SK-N-SH (cell line): ENCODE measurements at regions of chr16 and their contacts with region 1.

Region 1: GRCh38 chr16:56964243-56965148 is 2.7 kb downstream of the CETP start:
- DNase-seq: peak; percentile 79
- H3K4me3 ChIP-seq: peak overlapping the region in 1 of 2 experiments; percentile 42; a peak in 1 of 4 replicates
- H3K27ac ChIP-seq: no peak overlapping the region
- H3K4me1 ChIP-seq: peaks cover 0 to 12% of the 10 kb centered on the region in 2 experiments; a peak in 1 of 4 replicates
- H3K27me3 ChIP-seq: no peaks in the 10 kb centered on the region
- CTCF ChIP-seq: peak; percentile 82
- EP300 ChIP-seq: no peak
- RAD21 ChIP-seq: peak; percentile 58

Region 2: DNA sequence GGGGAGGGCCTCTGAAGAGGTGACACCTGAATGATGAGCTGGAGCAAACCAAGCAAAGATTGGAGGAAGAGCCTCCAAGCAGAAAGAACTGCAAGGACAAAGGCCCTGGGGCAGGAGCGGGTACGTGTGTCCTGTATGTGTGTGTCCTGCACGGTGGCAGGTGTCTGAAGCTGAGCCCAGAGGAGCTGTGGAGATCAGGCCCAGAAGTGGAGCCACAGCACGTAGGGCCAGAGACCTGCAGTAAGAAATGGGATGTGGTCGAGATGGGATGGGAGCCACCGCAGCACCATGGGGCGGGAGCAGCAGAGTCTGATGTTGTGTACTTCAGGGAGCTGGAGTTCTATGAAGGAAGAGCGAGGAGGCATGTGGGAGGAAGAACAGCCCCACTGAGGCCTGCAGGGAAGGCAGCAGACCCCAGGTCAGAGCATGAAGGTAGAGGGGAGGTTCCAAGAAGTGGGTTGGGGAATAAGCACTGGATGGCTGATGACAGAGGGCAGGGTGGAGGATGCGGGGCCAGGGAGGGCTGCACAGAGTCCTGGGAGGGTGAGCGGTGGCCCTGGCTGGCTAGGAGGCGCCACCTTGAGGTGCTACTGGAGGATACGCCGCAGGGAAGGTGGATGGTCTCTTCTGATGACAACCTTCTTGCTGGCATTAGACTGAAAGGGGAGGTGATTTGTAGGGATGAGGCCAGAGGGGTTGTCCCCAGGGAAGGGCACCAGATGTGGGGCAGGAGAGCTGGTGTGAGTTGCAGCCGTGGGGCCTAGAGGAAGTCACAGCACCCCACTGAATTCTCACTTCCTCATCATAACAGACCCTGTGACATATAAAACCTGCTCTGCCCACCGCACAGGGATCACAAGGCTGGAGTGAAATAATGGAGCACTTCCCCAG is 13.4 kb before region 1 on chr16:
- CTCF ChIA-PET with region 1: interaction called, 35 read pairs
- POLR2A ChIA-PET with region 1: no interaction called
- DNase-seq: peak; percentile 82
- H3K4me3 ChIP-seq: no peak overlapping the region
- H3K27ac ChIP-seq: no peak overlapping the region
- H3K4me1 ChIP-seq: no peaks in the 10 kb centered on the region; a peak in 1 of 4 replicates
- H3K27me3 ChIP-seq: no peaks in the 10 kb centered on the region
- CTCF ChIP-seq: peak; percentile 65
- EP300 ChIP-seq: no peak
- RAD21 ChIP-seq: peak; percentile 82

Region 3: DNA sequence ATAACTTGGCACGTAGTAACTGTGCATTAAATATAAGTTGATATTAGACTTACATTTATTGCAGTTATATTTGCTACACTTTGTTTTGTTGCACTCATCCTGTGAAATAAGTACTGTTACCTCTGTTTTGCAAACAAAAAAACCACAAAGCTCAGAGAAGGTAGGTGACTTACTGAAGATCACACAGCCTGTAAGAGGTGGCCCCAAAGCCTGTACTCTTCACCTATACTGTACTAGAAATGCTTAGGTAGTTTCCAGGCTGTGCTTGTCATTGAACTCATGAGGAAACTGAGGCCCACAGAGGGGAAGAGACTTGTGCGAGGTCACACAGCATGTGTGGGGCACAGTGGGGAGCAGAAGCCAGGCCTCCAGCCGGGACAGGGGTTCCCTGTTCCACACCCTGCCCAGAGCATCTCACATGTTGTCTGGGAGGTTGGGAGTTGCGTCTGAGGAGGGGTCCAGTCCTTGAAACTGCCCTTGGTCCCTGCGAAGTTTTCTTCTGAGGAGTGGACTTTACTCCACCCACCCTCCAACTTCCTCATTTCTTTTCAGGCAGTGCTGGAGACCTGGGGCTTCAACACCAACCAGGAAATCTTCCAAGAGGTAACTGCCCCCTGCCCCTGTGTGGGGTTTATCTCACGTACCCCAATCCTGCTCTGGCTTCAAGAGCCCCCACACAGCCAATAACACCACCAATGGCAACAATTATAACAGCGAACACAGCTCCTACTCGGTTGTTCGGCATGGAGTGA is 10.2 kb after region 1 on chr16:
- CTCF ChIA-PET with region 1: interaction called, 27 read pairs
- POLR2A ChIA-PET with region 1: no interaction called
- DNase-seq: no peak
- H3K4me3 ChIP-seq: no peak overlapping the region
- H3K27ac ChIP-seq: no peak overlapping the region
- H3K4me1 ChIP-seq: peaks cover 0 to 13% of the 10 kb centered on the region in 2 experiments; a peak in 1 of 4 replicates
- H3K27me3 ChIP-seq: no peaks in the 10 kb centered on the region
- CTCF ChIP-seq: no peak
- EP300 ChIP-seq: no peak
- RAD21 ChIP-seq: no peak

Region 4: DNA sequence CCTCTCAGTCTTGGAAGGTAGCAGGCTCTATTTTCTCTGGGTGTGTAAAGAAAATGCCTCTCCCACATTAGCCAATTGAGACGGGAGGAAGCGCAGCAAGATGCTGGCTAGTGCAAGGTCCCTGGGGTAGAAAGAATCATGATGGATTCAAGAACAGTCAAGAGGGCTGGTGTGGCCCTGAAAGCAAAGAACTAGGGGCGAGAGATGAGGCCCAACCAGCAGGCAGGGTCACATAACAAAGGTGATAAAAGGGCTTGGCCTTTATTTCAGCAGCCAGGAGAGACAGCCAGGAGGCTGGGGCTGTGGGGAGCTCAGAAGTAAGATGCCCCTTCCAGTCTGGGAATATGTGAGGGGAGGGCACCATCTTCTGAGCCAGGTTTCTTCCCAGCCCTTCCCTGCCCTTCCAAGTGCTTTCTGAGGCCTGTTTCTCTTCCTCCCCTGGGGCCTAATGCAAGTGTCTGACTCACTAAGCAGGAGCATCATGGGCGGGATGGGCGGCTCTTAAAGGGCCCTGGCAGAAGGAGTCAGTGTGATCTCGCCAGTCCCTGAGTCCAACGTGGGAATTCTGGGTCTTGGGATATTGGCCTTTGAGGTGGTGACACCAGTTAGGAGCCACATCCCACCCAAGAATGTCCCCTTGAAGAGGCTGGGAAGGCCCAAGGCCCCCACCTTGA is 20.9 kb after region 1 on chr16:
- CTCF ChIA-PET with region 1: interaction called, 17 read pairs
- POLR2A ChIA-PET with region 1: interaction called, 4 read pairs
- DNase-seq: no peak
- H3K4me3 ChIP-seq: no peak overlapping the region
- H3K27ac ChIP-seq: peak overlapping the region in 1 of 2 experiments; percentile 63; a peak in 2 of 4 replicates
- H3K4me1 ChIP-seq: peaks cover 8 to 18% of the 10 kb centered on the region in 2 experiments; a peak in 2 of 4 replicates
- H3K27me3 ChIP-seq: no peaks in the 10 kb centered on the region
- CTCF ChIP-seq: no peak
- EP300 ChIP-seq: no peak
- RAD21 ChIP-seq: no peak